ENCODE measurements at regions of chr20 and their contacts with region 1.

Region 1: DNA sequence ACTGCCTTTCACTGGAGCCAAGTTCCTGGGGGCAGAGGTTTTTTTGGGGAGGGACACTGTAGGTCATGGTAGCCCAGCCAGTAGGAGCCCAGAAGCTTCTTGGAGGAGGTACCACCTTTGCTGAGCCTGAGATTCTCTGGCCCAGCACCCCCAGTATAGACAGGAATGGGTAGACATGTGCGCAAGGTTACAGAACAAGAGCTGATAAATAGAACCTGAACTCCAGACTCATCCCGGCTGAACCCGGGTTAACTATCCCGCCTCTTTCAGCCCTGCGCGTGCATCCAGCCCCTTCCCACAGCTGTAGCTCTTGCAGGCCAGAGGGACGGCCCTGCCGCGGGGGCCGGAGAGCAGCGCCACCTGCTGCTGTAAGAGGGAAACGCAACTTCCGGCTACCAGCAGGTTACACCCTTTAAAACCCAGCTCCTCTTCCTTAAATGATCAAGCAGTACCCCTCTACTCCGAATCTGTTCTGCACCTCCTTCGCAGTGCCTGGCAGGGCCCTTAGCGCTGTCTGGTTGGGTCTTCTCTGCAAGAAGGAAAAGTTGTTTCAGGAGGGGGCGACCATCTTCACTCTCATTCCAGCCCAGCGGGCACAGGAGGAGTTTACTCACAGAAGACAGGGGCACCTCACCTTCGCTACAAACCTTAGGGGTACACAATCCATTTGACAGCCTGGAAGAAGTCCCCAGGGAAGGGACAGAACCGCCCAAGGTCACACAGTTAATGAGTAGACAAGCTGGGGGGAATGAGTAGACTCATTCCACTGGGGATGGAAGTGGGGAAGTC is 7.5 kb downstream of the SRXN1 start:
- DNase-seq: peak; percentile 38 to 59
- H3K4me3 ChIP-seq: no peak overlapping the region
- H3K27ac ChIP-seq: no peak overlapping the region
- H3K4me1 ChIP-seq: no peaks in the 10 kb centered on the region
- H3K27me3 ChIP-seq: no peaks in the 10 kb centered on the region
- CTCF ChIP-seq: peak; percentile 79 to 93 (median 86)
- POLR2A ChIP-seq: no peak

Region 2: DNA sequence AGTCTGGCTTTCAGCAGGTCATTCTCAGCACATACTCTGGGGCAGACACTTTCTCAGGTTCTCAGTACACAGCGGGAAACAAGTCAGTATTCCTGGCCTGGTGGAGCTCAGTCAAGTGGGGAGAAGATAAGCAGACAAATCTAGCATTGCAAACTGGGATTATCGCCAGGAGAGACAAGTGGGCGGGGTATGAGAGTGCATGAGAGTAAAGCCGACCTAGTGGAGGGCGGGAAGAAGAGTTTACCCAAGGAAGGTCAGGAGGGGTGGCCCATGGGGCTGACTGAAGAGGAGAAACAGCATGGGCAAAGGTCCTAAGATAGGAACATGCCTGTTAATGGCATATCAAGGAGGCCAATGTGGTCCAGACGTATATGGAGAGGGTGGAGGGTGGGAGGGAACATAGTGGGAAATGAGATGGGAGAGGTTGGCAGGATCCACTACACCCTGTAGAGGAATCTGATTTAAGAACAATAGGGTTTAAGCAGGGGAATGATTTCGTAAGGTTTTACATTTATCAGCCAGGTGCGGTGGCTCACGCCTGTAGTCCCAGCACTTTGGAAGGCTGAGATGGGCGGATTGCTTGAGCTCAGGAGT is 89.5 kb before region 1 on chr20:
- intact Hi-C with region 1: loop called (anchors 5 kb)
- DNase-seq: no peak
- H3K4me3 ChIP-seq: no peak overlapping the region
- H3K27ac ChIP-seq: no peak overlapping the region
- H3K4me1 ChIP-seq: no peaks in the 10 kb centered on the region
- H3K27me3 ChIP-seq: no peaks in the 10 kb centered on the region
- CTCF ChIP-seq: no peak
- POLR2A ChIP-seq: no peak

Region 3: DNA sequence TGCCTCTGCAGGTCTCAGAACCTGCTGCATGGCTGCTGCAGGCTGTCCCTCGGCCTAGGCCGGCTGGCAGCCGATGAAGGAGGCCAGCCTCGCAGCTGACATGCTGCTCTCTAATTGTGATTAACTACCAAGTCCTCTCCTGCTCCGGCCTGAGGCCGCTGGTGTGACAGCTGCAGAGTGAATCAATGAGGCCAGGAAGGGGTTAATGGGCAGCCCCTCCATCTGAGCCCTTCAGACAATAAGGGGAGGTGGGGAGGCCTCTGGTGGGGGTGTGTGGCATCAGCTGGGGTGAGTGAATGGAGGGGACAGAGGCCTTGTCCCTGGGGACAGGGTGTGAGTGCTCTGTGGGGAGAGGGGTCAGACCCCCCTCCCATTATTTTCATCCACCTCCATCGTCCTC is 88.3 kb after region 1 on chr20:
- intact Hi-C with region 1: no loop called
- DNase-seq: no peak
- H3K4me3 ChIP-seq: no peak overlapping the region
- H3K27ac ChIP-seq: no peak overlapping the region
- H3K4me1 ChIP-seq: no peaks in the 10 kb centered on the region
- H3K27me3 ChIP-seq: no peaks in the 10 kb centered on the region
- CTCF ChIP-seq: no peak
- POLR2A ChIP-seq: no peak

Measured in uterus (tissue), 4 donors.